ENCODE measurements at regions of chr9 and their contacts with region 1.

Region 1: GRCh38 chr9:114738581-114739316 is 56.8 kb upstream of the TEX48 start:
- DNase-seq: no peak

Region 2: DNA sequence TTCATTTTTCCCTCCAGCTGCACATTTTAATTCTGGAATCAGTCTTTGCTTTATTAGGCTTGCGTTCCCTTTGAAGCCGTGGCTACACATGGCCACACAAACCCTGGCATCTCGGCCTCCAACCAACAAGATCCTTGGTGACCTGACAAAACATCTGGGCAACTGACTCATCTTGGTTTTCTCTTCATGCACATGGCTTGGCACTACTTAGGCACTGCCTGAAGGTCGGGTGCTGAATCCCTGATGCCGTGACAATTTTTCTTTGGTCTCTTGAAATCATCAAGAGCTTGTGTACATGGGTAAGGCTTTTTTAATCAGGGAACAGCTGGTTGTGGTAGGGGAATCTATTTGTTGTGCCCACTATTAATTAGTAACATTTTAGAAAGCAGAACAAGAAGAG is 1398.8 kb after region 1 on chr9:
- intact Hi-C with region 1: loop called in 1 of 2 experiments (anchors 5 kb)
- DNase-seq: no peak

Measured in posterior vena cava (tissue), 2 donors.